Posterior cingulate gyrus (tissue), 11 donors: ENCODE measurements at regions of chr7 and their contacts with region 1.

Region 1: GRCh38 chr7:105268511-105269392 is 120.0 kb downstream of the SRPK2 start:
- DNase-seq: no peak

Region 2: GRCh38 chr7:105198223-105198622 is 70.5 kb before region 1 on chr7:
- intact Hi-C with region 1: loop called (anchors 10 kb)
- DNase-seq: no peak